Psoas muscle (tissue), 8 donors: ENCODE measurements at regions of chr7 and their contacts with region 1.

Region 1: GRCh38 chr7:70975754-70976153 is 156.2 kb upstream of the GALNT17 start:
- DNase-seq: no peak
- ATAC-seq: no peak
- H3K4me3 ChIP-seq: no peak overlapping the region
- H3K27ac ChIP-seq: no peak overlapping the region
- H3K4me1 ChIP-seq: no peaks in the 10 kb centered on the region
- H3K27me3 ChIP-seq: no peaks in the 10 kb centered on the region
- CTCF ChIP-seq: no peak

Region 2: DNA sequence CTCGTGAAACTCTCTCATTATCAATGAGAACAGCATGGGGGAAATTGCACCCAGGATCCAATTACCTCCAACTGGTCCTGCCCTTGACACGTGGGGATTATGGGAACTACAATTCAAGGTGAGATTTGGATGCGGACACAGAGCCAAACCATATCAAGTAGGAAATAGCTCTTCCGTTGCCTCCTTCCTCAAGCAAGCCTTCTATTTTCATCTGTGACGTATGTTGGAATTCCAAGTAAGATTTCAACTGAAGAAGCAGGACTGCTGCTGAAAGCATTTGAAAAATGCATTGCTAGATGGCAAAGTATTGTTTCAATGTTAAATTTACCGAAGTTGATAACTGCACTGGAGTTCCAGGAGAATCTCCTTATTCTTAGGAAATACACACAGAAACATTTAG is 22.0 kb before region 1 on chr7:
- intact Hi-C with region 1: loop called (anchors 2 kb)
- DNase-seq: no peak
- ATAC-seq: no peak
- H3K4me3 ChIP-seq: no peak overlapping the region
- H3K27ac ChIP-seq: no peak overlapping the region
- H3K4me1 ChIP-seq: no peaks in the 10 kb centered on the region
- H3K27me3 ChIP-seq: no peaks in the 10 kb centered on the region
- CTCF ChIP-seq: no peak